Natural killer cell (primary cell): ENCODE measurements at regions of chr1 and their contacts with region 1.

Region 1: DNA sequence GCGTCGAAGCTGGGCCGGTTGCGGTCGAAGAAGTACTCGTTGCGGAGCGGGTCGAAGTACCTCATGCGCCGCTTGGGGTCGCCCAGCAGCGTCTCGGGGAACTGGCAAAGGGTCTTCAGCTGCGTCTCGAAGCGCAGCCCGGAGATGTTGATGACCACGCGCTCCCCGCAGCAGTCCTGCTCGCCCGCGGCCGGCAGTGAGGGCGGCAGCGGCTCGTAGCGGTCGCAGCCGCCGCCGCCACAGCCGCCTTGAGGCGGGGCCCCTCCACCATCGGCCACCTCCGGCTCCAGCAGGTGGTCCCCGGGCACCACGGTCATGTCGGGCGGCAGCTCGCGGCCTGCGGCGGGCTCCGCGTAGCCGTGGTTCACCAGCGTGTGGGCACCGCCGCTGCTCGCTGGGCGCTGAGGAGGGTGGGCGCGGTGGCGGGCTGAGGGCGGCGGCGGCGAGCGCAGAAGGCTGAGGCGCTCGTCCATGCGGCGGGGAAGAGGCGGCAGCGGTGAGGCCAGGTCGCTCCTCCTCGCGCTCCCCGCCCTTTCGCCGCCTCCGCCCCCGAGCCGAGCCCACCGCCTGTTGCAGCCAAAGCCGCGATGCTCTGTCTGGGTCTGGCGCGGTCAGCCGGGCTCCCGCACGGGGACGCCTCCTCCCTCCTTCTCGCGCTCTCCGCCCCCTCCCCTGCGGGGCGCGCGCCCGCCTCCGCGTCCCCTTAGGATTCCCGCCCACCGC is at the start of gene KCNA3:
- DNase-seq: peak; percentile 72 to 82
- ATAC-seq: peak; percentile 59 to 74 (median 72)
- H3K4me3 ChIP-seq: peak within 1 kb of the TSS; percentile 68
- H3K4me3 Mint-ChIP-seq: peak within 1 kb of the TSS; percentile 98
- H3K27ac ChIP-seq: peak within 1 kb of the TSS; percentile 93
- H3K27ac Mint-ChIP-seq: peak within 1 kb of the TSS; percentile 88 to 98
- H3K4me1 ChIP-seq: peaks cover 26% of the 10 kb centered on the region
- H3K4me1 Mint-ChIP-seq: peaks cover 42 to 43% of the 10 kb centered on the region in 2 donors
- H3K27me3 ChIP-seq: no peaks in the 10 kb centered on the region
- H3K27me3 Mint-ChIP-seq: no peaks in the 10 kb centered on the region
- CTCF ChIP-seq: no peak
- total RNA-seq, gene KCNA3: 19.7 to 36.2 (median 30.3) TPM

Region 2: GRCh38 chr1:110619412-110620249 is 54.9 kb before region 1 on chr1:
- intact Hi-C with region 1: no loop called
- DNase-seq: peak; percentile 87 to 95
- ATAC-seq: peak; percentile 83 to 88 (median 86)
- H3K4me3 ChIP-seq: peak overlapping the region; percentile 55
- H3K4me3 Mint-ChIP-seq: peak overlapping the region; percentile 82
- H3K27ac ChIP-seq: peak overlapping the region; percentile 54
- H3K27ac Mint-ChIP-seq: peak overlapping the region; percentile 69 to 83
- H3K4me1 ChIP-seq: peaks cover 32% of the 10 kb centered on the region
- H3K4me1 Mint-ChIP-seq: peaks cover 22 to 27% of the 10 kb centered on the region in 2 donors
- H3K27me3 ChIP-seq: peaks cover 5% of the 10 kb centered on the region
- H3K27me3 Mint-ChIP-seq: peaks cover 28 to 33% of the 10 kb centered on the region in 2 donors
- CTCF ChIP-seq: peak; percentile 97

Region 3: DNA sequence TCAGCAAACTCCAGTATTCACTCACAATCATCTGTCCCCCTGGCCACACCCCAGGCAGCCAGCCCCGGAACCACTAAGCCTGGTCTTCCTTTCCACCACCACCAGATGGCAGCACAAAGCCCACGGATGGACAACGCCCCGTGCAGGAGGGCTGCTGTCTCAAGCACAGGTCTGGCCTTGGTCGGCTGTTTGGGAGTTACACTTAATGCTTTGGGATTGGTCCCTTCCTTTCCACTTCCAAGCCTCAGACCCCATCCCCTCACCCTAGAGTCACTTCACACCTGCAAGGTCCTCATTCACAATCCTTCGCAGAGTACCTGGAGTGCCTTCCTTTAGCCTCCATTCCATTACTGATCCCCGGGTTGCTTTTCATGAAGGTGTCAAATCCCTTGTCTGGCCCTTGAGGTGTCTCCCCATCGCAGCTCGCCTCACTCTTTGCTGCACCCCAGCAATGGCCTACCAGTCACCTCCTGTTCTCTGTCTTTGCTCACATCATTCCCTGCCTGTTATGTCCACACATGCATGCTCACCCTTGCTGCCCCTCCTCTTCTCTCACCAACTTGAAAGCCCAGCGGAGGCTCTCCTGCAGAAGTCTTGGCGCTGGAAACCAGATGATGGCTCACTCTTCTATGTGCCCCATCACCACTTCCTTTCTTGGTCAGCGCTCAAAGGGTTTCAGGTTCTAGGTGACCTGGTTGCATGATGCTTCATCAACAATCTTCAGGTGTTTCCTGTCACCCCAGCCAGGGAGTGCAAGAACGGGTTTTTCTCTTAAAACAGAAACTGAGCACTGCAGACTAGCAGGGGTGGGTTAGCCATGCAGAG is 43.4 kb before region 1 on chr1:
- intact Hi-C with region 1: loop called (anchors 5 kb)
- DNase-seq: peak; percentile 75 to 94
- ATAC-seq: peak; percentile 86 to 96 (median 95)
- H3K4me3 ChIP-seq: no peak overlapping the region
- H3K4me3 Mint-ChIP-seq: no peak overlapping the region
- H3K27ac ChIP-seq: peak overlapping the region; percentile 19
- H3K27ac Mint-ChIP-seq: no peak overlapping the region
- H3K4me1 ChIP-seq: peaks cover 52% of the 10 kb centered on the region
- H3K4me1 Mint-ChIP-seq: peaks cover 16 to 21% of the 10 kb centered on the region in 2 donors
- H3K27me3 ChIP-seq: no peaks in the 10 kb centered on the region
- H3K27me3 Mint-ChIP-seq: peaks cover 0 to 3% of the 10 kb centered on the region in 2 donors
- CTCF ChIP-seq: peak; percentile 86

Region 4: DNA sequence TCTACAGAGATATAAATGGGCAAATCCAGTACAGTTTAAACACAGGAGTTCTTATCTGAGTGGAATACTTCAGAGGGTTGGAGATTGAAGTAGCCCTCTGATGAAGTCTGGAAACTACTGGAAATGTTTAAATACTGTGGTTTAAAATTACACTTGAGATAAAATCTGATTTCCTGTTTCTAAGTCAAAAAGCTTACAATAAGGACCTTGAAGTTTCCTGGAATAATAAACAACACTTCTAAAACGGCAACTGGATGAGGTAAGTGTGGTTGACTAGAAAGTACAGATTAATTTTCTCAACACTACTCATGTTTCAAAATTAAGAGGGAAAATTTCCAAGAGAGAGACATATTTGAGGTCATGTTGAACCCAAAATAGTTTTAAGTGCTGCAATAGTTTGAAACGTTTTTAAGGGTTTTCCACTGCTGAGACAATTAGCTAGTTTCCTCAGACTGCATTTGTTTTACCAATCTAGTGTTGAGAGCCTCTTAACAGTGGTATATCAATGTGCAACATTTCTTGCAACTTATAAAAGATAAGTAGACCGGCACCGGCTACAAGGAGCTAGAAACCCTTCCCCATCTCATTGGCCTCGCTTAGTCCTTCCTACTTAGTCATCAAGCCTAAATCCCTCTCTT is 27.1 kb before region 1 on chr1:
- intact Hi-C with region 1: loop called (anchors 1 kb)
- DNase-seq: peak in 1 of 2 donors; percentile 64
- ATAC-seq: peak; percentile 46 to 73 (median 48)
- H3K4me3 ChIP-seq: no peak overlapping the region
- H3K4me3 Mint-ChIP-seq: no peak overlapping the region
- H3K27ac ChIP-seq: peak overlapping the region; percentile 75
- H3K27ac Mint-ChIP-seq: no peak overlapping the region
- H3K4me1 ChIP-seq: peaks cover 32% of the 10 kb centered on the region
- H3K4me1 Mint-ChIP-seq: peaks cover 13% of the 10 kb centered on the region in 2 donors
- H3K27me3 ChIP-seq: no peaks in the 10 kb centered on the region
- H3K27me3 Mint-ChIP-seq: no peaks in the 10 kb centered on the region
- CTCF ChIP-seq: no peak

Region 5: GRCh38 chr1:110879758-110880606 is 205.5 kb after region 1 on chr1:
- intact Hi-C with region 1: loop called (anchors 2 kb)
- DNase-seq: peak; percentile 42 to 78
- ATAC-seq: peak; percentile 60 to 79 (median 67)
- H3K4me3 ChIP-seq: peak overlapping the region; percentile 8
- H3K4me3 Mint-ChIP-seq: peak overlapping the region; percentile 99
- H3K27ac ChIP-seq: peak overlapping the region; percentile 86
- H3K27ac Mint-ChIP-seq: peak overlapping the region; percentile 92 to 99
- H3K4me1 ChIP-seq: peaks cover 35% of the 10 kb centered on the region
- H3K4me1 Mint-ChIP-seq: peaks cover 75 to 99% of the 10 kb centered on the region in 2 donors
- H3K27me3 ChIP-seq: no peaks in the 10 kb centered on the region
- H3K27me3 Mint-ChIP-seq: no peaks in the 10 kb centered on the region
- CTCF ChIP-seq: no peak